ENCODE measurements at regions of chr17 and their contacts with region 1.

Region 1: DNA sequence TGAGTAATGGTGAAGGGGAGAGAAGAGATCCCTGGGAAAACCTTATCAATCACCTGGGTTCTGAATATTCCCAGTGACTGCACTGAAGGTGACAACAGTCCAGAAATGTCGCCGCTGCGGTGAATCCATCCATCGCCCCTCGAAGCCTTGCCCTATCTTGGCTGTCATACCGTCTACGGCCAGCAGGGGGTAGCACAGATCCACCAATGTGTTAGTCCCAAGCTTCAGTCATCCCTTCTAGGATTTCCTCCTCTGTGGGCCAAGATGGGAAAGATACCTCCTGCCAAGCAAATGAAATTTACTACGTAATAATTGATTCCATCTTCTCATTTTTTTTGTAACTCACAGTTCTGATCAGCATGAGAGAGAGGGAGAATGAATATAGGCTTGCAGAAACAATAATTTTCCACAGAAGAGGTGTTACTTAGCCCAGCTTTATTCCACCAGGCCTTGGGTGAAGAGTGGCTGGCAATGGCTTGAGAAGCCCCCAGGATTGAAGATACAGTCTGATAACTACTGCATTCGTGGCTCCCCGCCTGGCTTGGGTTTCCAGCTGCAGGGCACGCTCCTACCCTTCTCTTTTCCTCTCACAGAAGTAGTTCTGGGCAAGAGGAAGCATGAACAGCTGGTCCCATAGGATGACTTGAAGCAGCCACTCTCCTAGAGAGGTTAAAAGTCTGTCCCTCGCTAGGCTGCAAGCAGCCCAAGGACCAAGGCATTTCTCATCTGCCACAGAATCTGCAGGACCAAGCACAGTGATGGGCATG is 2.6 kb upstream of the FMNL1 start:
- DNase-seq: peak; percentile 55
- H3K4me3 ChIP-seq: no peak overlapping the region
- H3K27ac ChIP-seq: no peak overlapping the region
- H3K4me1 ChIP-seq: peaks cover 9% of the 10 kb centered on the region
- H3K27me3 ChIP-seq: no peaks in the 10 kb centered on the region
- CTCF ChIP-seq: peak; percentile 84 to 93

Region 2: GRCh38 chr17:45148183-45149036 is 70.7 kb before region 1 on chr17 and contains the start of gene HEXIM1:
- CTCF ChIA-PET with region 1: no interaction called
- dilution Hi-C with region 1: loop called (anchors 5 kb)
- in situ Hi-C with region 1: no loop called
- intact Hi-C with region 1: no loop called
- DNase-seq: peak; percentile 100
- H3K4me3 ChIP-seq: peak within 1 kb of the TSS; percentile 72 to 98 (median 98)
- H3K27ac ChIP-seq: peak within 1 kb of the TSS; percentile 99
- H3K4me1 ChIP-seq: peaks cover 34% of the 10 kb centered on the region
- H3K27me3 ChIP-seq: no peaks in the 10 kb centered on the region
- CTCF ChIP-seq: no peak
- total RNA-seq, gene HEXIM1: 20.5 to 35.2 TPM

Region 3: GRCh38 chr17:45197555-45198334 is 21.3 kb before region 1 on chr17:
- CTCF ChIA-PET with region 1: no interaction called
- dilution Hi-C with region 1: no loop called
- in situ Hi-C with region 1: no loop called
- intact Hi-C with region 1: no loop called
- DNase-seq: peak; percentile 78
- H3K4me3 ChIP-seq: peak overlapping the region in 1 of 3 experiments; percentile 20
- H3K27ac ChIP-seq: no peak overlapping the region
- H3K4me1 ChIP-seq: peaks cover 16% of the 10 kb centered on the region
- H3K27me3 ChIP-seq: no peaks in the 10 kb centered on the region
- CTCF ChIP-seq: peak; percentile 93 to 99

Region 4: DNA sequence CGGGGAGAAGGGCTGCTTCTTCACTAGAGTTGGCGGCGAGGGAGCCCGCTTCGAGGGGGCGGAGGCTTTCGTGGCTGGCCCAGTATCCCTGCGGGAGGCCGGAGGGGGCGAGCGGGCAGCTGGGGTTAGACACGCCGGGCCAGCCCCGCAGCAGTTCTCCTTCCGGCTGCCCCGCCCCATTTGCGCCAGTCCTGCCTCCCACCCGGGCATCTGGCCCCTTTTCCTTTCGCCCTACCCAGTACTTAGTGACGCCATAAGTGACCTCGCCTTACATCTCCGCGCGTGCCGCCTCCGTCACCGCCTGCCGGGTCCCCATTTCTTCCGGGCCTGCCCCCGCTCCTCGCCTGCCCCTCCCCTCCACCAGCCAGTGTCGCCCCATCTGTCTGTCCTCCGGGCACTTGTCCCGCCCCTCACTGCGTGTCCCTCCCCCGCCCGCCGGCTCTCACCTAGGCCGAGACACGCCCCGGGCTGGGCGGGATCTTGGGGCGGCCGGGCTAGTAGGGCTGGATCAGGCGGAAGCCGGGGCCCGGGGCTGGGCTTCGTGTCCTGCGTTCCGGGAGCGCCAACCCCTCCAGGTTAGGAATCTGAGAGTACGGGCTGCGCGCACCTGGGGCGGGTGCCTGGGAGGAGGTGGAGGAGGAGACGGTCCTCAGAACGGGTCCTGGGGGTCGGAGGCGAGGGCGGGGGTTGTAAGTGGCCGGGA is 28.5 kb after region 1 on chr17:
- CTCF ChIA-PET with region 1: no interaction called
- dilution Hi-C with region 1: no loop called
- in situ Hi-C with region 1: no loop called
- intact Hi-C with region 1: loop called (anchors 1 kb)
- DNase-seq: peak; percentile 94
- H3K4me3 ChIP-seq: peak overlapping the region; percentile 67 to 84 (median 79)
- H3K27ac ChIP-seq: peak overlapping the region; percentile 31
- H3K4me1 ChIP-seq: peaks cover 16% of the 10 kb centered on the region
- H3K27me3 ChIP-seq: no peaks in the 10 kb centered on the region
- CTCF ChIP-seq: no peak

Region 5: GRCh38 chr17:45265821-45266220 is 46.7 kb after region 1 on chr17:
- CTCF ChIA-PET with region 1: no interaction called
- dilution Hi-C with region 1: loop called (anchors 5 kb)
- in situ Hi-C with region 1: no loop called
- intact Hi-C with region 1: no loop called
- DNase-seq: peak; percentile 27
- H3K4me3 ChIP-seq: no peak overlapping the region
- H3K27ac ChIP-seq: no peak overlapping the region
- H3K4me1 ChIP-seq: peaks cover 12% of the 10 kb centered on the region
- H3K27me3 ChIP-seq: no peaks in the 10 kb centered on the region
- CTCF ChIP-seq: no peak

Region 6: GRCh38 chr17:45385331-45385997 is 166.4 kb after region 1 on chr17:
- CTCF ChIA-PET with region 1: interaction called, 7 read pairs
- dilution Hi-C with region 1: loop called (anchors 5 kb)
- in situ Hi-C with region 1: loop called in 1 of 2 experiments (anchors 5 kb)
- intact Hi-C with region 1: loop called (anchors 1 kb)
- DNase-seq: peak; percentile 70
- H3K4me3 ChIP-seq: no peak overlapping the region
- H3K27ac ChIP-seq: no peak overlapping the region
- H3K4me1 ChIP-seq: peaks cover 30% of the 10 kb centered on the region
- H3K27me3 ChIP-seq: no peaks in the 10 kb centered on the region
- CTCF ChIP-seq: peak; percentile 98 to 99

Region 7: GRCh38 chr17:45640141-45640850 is 421.2 kb after region 1 on chr17:
- CTCF ChIA-PET with region 1: no interaction called
- dilution Hi-C with region 1: no loop called
- in situ Hi-C with region 1: no loop called
- intact Hi-C with region 1: loop called (anchors 5 kb)
- DNase-seq: peak; percentile 39
- H3K4me3 ChIP-seq: no peak overlapping the region
- H3K27ac ChIP-seq: no peak overlapping the region
- H3K4me1 ChIP-seq: no peaks in the 10 kb centered on the region
- H3K27me3 ChIP-seq: no peaks in the 10 kb centered on the region
- CTCF ChIP-seq: peak; percentile 97 to 99

Region 8: DNA sequence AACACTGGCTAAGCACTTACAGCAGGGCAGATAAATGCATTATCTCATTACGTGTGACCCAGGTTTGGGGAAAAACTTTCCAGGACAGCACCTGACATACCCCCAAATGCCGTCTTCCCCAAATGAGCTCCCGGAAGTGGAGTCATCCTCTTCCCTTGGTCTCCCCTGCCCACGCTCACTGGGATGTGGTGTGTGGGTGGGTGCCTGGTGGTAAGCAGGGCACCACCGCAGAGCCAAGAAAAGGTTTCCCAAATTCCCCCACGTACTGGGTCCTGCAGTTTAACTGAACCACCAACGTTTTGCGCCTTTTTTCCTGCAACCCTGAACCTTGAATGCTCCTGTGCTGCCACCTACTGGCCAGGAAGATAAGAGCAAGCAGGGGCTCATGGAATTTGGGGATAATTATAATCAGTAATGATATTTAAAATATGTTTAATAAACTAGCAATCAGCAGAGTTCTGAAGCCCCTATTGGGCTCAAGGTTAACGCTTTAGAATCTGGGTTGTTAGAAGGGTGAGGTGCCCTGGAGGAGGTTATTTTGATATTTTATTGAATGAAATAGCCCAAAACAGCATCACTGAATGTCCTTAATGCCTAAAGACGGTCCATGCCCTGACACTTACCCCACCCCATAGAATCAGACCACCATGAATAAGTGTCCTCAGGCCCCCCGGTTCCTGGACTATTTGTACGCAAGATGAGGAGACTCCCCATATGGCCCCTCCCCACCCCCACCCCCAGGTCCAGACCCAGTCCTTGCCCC is 633.6 kb after region 1 on chr17:
- CTCF ChIA-PET with region 1: no interaction called
- dilution Hi-C with region 1: no loop called
- in situ Hi-C with region 1: loop called in 1 of 2 experiments (anchors 25 kb)
- intact Hi-C with region 1: no loop called
- DNase-seq: peak; percentile 22
- H3K4me3 ChIP-seq: no peak overlapping the region
- H3K27ac ChIP-seq: no peak overlapping the region
- H3K4me1 ChIP-seq: no peaks in the 10 kb centered on the region
- H3K27me3 ChIP-seq: no peaks in the 10 kb centered on the region
- CTCF ChIP-seq: peak; percentile 90

Measured in mammary epithelial cell (primary cell).